Dendritic cell treated with granulocyte-macrophage colony-stimulating factor and Interleukin-4, amounts not matched to agents 40 ng/mL and 50 ng/mL, for 4 days (primary cell): ENCODE measurements at regions of chr3 and their contacts with region 1.

Region 1: DNA sequence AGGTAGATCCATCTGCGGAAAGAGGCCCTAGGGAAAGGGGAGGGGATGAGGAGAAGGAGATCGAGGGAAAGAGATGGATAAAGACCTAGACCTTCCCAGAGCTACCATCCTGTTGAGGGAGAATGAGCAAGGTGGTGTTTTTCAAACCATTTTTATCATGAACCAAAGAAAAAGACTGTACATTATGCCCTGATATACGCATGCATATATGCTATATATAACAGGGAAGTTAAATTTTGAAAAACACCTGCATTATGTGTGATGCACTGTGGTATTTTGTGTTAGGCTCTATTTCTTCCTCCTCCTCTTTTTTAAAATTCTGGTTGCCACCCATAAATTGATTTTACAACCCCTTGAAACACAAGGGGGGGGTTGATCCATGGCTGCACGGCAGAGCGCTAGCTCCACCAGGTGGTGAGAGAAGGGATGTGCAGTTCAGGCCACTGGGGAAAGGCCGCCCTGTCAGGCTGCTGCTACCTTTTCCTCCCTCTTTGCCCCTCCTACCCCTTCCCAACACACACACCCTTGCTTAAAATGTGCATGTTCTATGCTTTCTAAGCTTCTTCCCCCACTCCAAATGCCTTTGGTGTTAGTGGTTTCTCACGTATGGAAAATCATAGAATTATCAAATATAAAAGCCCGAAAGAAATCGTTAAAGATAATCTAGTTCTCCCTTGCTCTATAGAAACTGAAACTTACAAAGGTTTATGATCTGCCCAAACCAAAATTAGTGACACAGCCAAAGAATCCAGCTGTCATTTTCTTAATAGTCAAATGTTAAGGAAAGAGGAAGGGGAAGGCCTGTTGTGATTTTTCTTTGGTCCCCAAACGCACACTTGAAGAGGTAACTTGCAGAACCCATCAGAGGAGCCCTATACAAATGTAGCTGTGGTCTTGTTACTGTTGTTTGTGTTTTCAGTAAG is 262.0 kb upstream of the UMPS start:
- H3K4me3 Mint-ChIP-seq: no peak overlapping the region
- H3K27ac Mint-ChIP-seq: no peak overlapping the region
- H3K4me1 Mint-ChIP-seq: no peaks in the 10 kb centered on the region
- H3K27me3 Mint-ChIP-seq: peaks cover 13% of the 10 kb centered on the region

Region 2: DNA sequence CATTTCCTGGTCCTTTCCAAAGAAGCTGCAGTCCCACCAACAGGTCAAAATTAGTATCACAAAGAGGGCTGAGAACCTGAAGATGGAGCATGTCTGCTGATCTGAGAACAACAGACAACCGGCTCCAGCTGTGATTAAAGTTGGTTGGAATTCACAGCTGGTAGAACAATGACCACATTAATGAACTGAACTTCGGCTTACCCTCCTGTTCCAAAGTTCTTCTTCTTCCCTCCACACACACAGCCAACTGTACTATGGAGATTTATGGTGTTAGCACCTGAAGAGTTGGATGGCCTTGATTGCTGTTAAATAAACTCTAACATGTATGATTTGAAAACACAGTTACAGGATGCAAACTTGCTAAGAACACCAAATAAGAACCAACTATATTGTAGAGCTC is 448.9 kb before region 1 on chr3:
- intact Hi-C with region 1: loop called (anchors 5 kb)
- H3K4me3 Mint-ChIP-seq: no peak overlapping the region
- H3K27ac Mint-ChIP-seq: no peak overlapping the region
- H3K4me1 Mint-ChIP-seq: no peaks in the 10 kb centered on the region
- H3K27me3 Mint-ChIP-seq: peaks cover 14% of the 10 kb centered on the region